HepG2 (cell line): ENCODE measurements at regions of chr1 and their contacts with region 1.

Region 1: GRCh38 chr1:23559136-23559984 is at the start of gene ID3:
- DNase-seq: peak; percentile 93
- ATAC-seq: peak; percentile 55
- H3K4me3 ChIP-seq: peak within 1 kb of the TSS; percentile 73 to 98 (median 83)
- H3K27ac ChIP-seq: peak within 1 kb of the TSS; percentile 98
- H3K4me1 ChIP-seq: peaks cover 77% of the 10 kb centered on the region
- H3K27me3 ChIP-seq: no peaks in the 10 kb centered on the region; a peak in 1 of 5 replicates
- CTCF ChIP-seq: 0 out of 2 replicates have a peak, but pooled peaks have one; percentile 12
- EP300 ChIP-seq: peak in 1 of 2 experiments; percentile 16; a peak in 1 of 4 replicates
- POLR2A ChIP-seq: peak; percentile 96 to 98
- RAD21 ChIP-seq: 0 out of 2 replicates have a peak, but pooled peaks have one; percentile 34
- total RNA-seq, gene ID3: 67.8 and 115 TPM in 2 replicates

Region 2: DNA sequence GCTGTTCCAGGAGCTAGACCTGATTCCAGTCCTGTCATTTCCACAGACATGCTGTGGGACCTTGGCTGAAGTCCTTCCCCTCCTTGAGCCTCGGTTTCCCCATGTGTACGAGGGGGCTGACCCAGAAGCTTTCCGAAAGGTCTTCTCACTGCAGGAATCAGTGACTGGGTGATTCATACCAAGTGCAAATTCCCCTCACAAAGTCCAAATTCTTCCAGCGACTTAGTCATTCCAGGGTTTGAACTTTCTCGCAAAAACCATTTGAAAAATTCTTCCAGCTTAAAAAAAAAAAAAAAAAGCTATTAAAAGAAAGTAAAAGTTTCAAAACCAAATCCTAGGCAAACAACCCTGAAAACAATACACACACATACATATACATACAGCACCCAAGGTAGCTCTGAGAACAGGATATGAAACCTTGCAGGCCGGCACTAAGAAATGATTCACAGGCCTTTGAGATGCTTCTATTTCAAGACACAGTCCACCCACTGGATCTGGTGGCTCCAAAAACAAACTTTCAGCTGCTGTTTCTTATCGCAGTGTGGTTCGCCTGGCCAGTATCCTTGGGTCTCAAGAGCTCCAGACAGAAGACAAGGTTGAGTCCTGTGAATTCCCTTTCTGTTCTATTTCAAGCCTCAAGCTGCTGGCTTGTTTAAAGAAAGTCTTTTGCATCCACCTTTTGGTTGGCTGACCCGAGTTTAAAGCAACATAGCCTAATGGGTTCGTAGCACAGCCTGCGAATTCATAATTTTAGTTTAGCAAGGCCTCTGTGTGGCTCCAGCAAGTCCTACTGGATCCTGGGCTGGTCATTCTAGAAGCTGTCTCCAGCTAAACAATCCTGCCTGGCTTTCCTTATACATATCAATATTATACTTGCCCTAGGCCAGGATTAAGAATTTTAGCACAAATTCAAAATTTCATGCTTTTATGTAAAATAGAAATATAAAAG is 18.0 kb after region 1 on chr1:
- CTCF ChIA-PET with region 1: no interaction called
- POLR2A ChIA-PET with region 1: interaction called, 38 read pairs
- in situ Hi-C with region 1: no loop called
- intact Hi-C with region 1: no loop called
- DNase-seq: peak; percentile 79
- ATAC-seq: peak; percentile 57
- H3K4me3 ChIP-seq: peak overlapping the region in 1 of 3 experiments; percentile 35; a peak in 1 of 6 replicates
- H3K27ac ChIP-seq: peak overlapping the region; percentile 11
- H3K4me1 ChIP-seq: peaks cover 67% of the 10 kb centered on the region
- H3K27me3 ChIP-seq: peaks cover 0 to 17% of the 10 kb centered on the region in 2 experiments; a peak in 1 of 5 replicates
- CTCF ChIP-seq: no peak
- EP300 ChIP-seq: no peak; a peak in 1 of 4 replicates
- POLR2A ChIP-seq: no peak
- RAD21 ChIP-seq: no peak

Region 3: DNA sequence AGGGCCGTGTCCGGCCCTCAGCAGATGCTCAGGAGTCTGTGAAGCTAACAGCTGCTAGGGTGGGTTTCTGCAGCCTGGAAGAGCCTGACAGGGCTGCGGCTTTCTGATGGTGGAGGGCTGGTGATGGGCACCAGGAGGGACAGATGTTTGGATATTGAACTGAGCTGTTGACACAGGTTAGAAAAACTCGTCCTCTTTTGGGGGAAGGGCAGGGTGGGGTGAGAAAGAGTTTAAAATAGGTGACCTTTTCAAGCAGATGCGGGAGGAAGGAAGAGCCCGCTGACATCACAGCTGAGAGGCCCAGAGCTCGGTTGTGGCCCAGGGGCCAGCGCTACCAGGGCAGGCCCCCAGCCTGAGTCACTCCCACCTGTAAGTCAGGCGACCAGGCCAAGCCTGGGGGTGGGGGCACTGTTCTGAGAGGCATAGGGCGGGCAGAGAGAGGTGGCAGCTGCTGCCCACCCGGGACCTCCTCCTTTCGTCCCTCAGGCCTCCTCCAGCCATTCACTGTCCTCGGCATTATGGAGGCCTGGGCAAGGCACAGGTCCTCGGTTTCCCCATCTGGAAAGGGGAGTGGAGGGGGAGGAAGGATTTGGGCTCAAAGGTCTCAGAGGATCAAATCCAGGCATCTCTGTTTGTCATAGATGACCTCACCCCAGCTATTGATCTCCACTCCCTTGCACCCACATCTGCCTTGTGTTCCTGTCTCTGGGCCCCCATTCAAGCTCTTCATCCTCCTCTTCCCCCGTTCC is 32.3 kb after region 1 on chr1:
- CTCF ChIA-PET with region 1: no interaction called
- POLR2A ChIA-PET with region 1: interaction called, 54 read pairs
- in situ Hi-C with region 1: no loop called
- intact Hi-C with region 1: loop called (anchors 5 kb)
- DNase-seq: peak; percentile 85
- ATAC-seq: peak; percentile 81
- H3K4me3 ChIP-seq: peak overlapping the region; percentile 1 to 63 (median 30); a peak in 4 of 6 replicates
- H3K27ac ChIP-seq: peak overlapping the region; percentile 53
- H3K4me1 ChIP-seq: peaks cover 98% of the 10 kb centered on the region
- H3K27me3 ChIP-seq: 0 out of 5 replicates have a peak, but pooled peaks cover 0 to 2% of the 10 kb centered on the region in 2 experiments
- CTCF ChIP-seq: no peak
- EP300 ChIP-seq: 0 out of 4 replicates have a peak, but pooled peaks of 1 of the 2 experiments have one; percentile 52
- POLR2A ChIP-seq: no peak
- RAD21 ChIP-seq: no peak

Region 4: GRCh38 chr1:23634842-23635651 is 75.7 kb after region 1 on chr1:
- CTCF ChIA-PET with region 1: no interaction called
- POLR2A ChIA-PET with region 1: interaction called, 10 read pairs
- in situ Hi-C with region 1: no loop called
- intact Hi-C with region 1: no loop called
- DNase-seq: peak; percentile 53
- ATAC-seq: peak; percentile 63
- H3K4me3 ChIP-seq: peak overlapping the region; percentile 47 to 69 (median 67)
- H3K27ac ChIP-seq: no peak overlapping the region
- H3K4me1 ChIP-seq: peaks cover 27% of the 10 kb centered on the region
- H3K27me3 ChIP-seq: peaks cover 4 to 22% of the 10 kb centered on the region in 2 experiments; a peak in 4 of 5 replicates
- CTCF ChIP-seq: peak; percentile 80
- EP300 ChIP-seq: no peak
- POLR2A ChIP-seq: no peak
- RAD21 ChIP-seq: no peak

Region 5: DNA sequence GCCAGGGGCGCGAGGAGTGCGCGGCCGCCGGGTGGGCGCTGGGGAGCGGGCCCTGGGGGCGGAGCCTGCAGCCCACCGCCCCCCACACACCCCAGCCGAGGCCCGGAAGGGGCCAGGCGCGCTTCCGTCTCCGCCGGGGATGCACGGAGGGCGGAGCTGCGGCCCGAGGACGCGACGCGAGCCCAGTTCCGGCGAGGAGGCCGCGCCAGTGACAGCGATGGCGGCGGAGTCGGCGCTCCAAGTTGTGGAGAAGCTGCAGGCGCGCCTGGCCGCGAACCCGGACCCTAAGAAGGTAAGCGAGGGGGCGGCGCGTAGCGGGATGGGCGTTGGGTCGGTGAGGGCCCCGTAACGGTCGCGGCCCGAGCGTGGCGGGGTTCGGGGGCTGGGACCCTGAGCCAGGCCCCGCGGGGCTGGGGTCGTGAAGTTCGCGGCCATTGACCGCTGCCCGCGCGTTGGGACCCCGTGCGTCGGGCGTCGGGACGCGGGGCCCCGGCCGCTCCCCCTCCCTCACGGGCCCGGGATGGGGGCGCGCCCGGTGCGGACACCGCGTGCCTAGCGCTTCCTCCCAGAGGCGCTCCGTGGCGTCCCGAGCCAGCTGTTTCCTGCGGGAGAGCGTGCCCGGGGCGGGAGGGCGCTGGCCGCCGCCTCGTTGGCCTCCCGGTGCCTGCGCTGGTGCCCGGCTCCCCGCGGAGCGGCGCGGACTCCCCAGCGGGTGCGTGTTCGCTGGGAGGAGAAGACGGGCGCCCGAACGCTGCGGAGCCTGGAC is 184.1 kb after region 1 on chr1 and contains the start of gene ELOA:
- CTCF ChIA-PET with region 1: no interaction called
- POLR2A ChIA-PET with region 1: no interaction called
- in situ Hi-C with region 1: no loop called
- intact Hi-C with region 1: loop called (anchors 10 kb)
- DNase-seq: peak; percentile 35
- ATAC-seq: peak; percentile 93
- H3K4me3 ChIP-seq: peak within 1 kb of the TSS; percentile 81 to 98 (median 93)
- H3K27ac ChIP-seq: peak within 1 kb of the TSS; percentile 79
- H3K4me1 ChIP-seq: peaks cover 37% of the 10 kb centered on the region
- H3K27me3 ChIP-seq: no peaks in the 10 kb centered on the region; a peak in 1 of 5 replicates
- CTCF ChIP-seq: no peak; the same call in 1 of the 2 replicates
- EP300 ChIP-seq: no peak
- POLR2A ChIP-seq: peak; percentile 77 to 95
- RAD21 ChIP-seq: peak; percentile 23; the same call in 1 of the 2 replicates
- total RNA-seq, gene ELOA: 28.5 and 36.3 TPM in 2 replicates